ENCODE measurements at regions of chr7 and their contacts with region 1.

Region 1: DNA sequence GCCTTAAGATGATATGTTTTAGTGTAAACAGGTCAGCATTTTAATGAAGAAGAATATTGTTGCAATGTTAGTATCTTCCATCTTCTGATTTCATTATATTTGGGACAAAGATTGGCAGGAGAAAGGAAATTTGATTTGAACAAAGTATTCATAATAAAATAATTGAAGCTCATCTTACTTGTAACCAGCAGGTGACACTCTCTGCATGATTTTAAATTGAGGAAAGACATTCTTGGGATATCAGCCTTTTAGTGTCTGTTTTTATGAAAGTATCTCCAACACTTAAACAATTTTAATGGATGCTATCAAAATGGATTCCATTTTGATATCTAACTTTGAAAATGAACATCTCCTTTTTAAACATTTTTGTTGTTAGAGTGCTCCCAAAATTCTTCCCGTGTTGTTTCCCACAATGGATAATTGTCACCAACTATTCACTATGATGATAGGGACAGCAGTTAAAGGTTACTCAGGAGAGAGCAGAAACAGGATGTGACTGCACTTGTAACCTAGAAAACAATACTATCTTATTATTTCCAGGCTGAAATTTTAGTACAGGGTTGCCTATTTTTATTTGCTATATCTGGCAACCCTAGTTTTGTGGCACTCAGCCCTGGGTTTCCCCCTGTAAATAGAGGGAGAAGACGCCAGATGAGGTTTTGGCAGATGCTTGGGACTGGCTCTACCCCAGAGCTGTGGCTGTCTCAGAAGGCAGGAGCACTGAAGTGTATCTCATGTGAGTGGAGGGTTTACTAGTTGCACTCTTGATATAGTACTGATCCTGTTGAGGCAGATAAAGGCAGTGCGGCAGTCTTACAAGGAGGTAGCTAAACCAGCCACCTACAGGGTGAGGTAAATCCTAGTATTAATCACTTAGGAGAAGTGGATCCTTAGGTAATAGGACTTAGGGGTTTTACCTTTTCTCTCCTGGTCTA is 31.0 kb upstream of the ABCB4 start:
- DNase-seq: peak; percentile 11
- ATAC-seq: no peak
- H3K4me3 ChIP-seq: no peak overlapping the region
- H3K27ac ChIP-seq: no peak overlapping the region
- H3K4me1 ChIP-seq: peaks cover 14% of the 10 kb centered on the region
- H3K27me3 ChIP-seq: no peaks in the 10 kb centered on the region
- CTCF ChIP-seq: peak; percentile 34
- EP300 ChIP-seq: no peak
- POLR2A ChIP-seq: no peak
- RAD21 ChIP-seq: no peak

Region 2: GRCh38 chr7:87312215-87312865 is 194.2 kb before region 1 on chr7:
- CTCF ChIA-PET with region 1: interaction called, 7 read pairs
- POLR2A ChIA-PET with region 1: no interaction called
- in situ Hi-C with region 1: loop called (anchors 5 kb)
- intact Hi-C with region 1: loop called (anchors 1 kb)
- DNase-seq: peak; percentile 56
- ATAC-seq: peak; percentile 84
- H3K4me3 ChIP-seq: no peak overlapping the region
- H3K27ac ChIP-seq: no peak overlapping the region
- H3K4me1 ChIP-seq: peaks cover 42% of the 10 kb centered on the region
- H3K27me3 ChIP-seq: no peaks in the 10 kb centered on the region
- CTCF ChIP-seq: peak; percentile 95
- EP300 ChIP-seq: no peak
- POLR2A ChIP-seq: no peak
- RAD21 ChIP-seq: peak; percentile 92

Region 3: DNA sequence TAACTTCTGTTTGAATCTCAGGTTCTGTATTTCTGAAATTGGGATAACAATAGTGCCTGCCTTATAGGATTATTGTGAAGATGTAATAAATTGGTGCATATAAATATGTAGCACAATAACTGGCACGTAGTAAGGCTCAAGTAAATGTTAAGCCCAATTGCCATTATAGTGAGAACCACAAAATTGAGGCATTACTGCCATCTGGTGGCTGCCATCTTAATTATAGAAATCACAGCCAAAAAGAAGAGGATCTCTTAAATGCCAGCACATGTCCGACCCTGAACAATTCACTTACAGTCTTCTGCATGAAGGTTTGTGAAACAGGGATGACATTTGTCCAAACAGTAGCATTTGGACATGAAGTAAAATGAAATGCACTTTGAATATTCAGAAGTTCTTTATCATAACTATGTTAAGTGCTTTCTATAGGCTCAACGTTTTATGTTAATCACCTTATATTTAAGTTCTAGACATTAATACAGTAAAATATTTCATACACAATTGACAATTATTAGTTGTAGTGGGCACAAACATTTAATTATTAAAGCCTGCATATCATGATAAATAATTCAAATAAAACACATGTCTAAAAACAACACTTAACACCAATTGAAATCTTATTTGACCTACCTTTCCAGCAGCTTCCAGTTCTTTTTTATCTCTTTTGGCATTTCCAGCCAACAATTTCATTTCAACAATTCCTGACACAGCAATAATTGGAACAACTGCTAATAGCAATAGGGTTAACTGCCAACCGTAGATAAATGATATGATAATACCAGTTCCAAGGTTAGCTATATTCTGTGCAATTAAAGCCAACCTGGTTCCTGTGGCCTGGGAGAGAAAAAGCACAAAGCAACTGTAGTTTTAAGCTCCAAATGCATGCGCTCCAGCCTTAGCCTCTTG is 89.6 kb before region 1 on chr7:
- CTCF ChIA-PET with region 1: no interaction called
- POLR2A ChIA-PET with region 1: no interaction called
- in situ Hi-C with region 1: no loop called
- intact Hi-C with region 1: loop called (anchors 2 kb)
- DNase-seq: peak; percentile 59
- ATAC-seq: peak; percentile 77
- H3K4me3 ChIP-seq: no peak overlapping the region
- H3K27ac ChIP-seq: no peak overlapping the region
- H3K4me1 ChIP-seq: peaks cover 11% of the 10 kb centered on the region
- H3K27me3 ChIP-seq: no peaks in the 10 kb centered on the region
- CTCF ChIP-seq: peak; percentile 85
- EP300 ChIP-seq: no peak
- POLR2A ChIP-seq: no peak
- RAD21 ChIP-seq: peak; percentile 73

Region 4: GRCh38 chr7:87463982-87464381 is 42.5 kb before region 1 on chr7:
- CTCF ChIA-PET with region 1: no interaction called
- POLR2A ChIA-PET with region 1: interaction called, 15 read pairs
- in situ Hi-C with region 1: no loop called
- intact Hi-C with region 1: no loop called
- DNase-seq: peak; percentile 84
- ATAC-seq: peak; percentile 88
- H3K4me3 ChIP-seq: peak overlapping the region in 2 of 3 experiments; percentile 7 to 51; a peak in 3 of 6 replicates
- H3K27ac ChIP-seq: peak overlapping the region; percentile 87
- H3K4me1 ChIP-seq: peaks cover 37% of the 10 kb centered on the region
- H3K27me3 ChIP-seq: no peaks in the 10 kb centered on the region
- CTCF ChIP-seq: no peak
- EP300 ChIP-seq: peak; percentile 76 to 89; a peak in 3 of 4 replicates
- POLR2A ChIP-seq: no peak
- RAD21 ChIP-seq: no peak

Region 5: GRCh38 chr7:87564289-87564963 is 57.9 kb after region 1 on chr7:
- CTCF ChIA-PET with region 1: no interaction called
- POLR2A ChIA-PET with region 1: no interaction called
- in situ Hi-C with region 1: no loop called
- intact Hi-C with region 1: no loop called
- DNase-seq: peak; percentile 20
- ATAC-seq: peak; percentile 87
- H3K4me3 ChIP-seq: no peak overlapping the region
- H3K27ac ChIP-seq: peak overlapping the region; percentile 23
- H3K4me1 ChIP-seq: peaks cover 23% of the 10 kb centered on the region
- H3K27me3 ChIP-seq: no peaks in the 10 kb centered on the region
- CTCF ChIP-seq: peak; percentile 79
- EP300 ChIP-seq: no peak
- POLR2A ChIP-seq: no peak
- RAD21 ChIP-seq: no peak

Region 6: DNA sequence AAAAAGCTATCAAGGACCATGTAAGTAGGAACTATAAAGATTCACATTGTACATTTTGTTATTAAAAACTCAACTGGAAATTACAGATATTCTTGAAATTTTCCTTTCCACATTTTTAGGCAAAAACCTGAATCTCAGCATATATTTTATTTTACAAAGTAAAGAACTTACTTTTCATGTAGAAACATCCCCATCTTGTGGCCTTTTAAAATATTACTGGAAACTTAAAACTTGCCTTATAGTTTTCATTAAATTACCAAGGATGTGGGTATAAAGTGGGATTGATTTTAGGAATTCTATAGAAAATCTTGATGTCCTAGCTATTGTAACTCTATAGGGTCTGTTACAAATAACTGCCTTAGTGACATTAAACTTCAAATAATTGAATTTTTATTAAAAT is 380.4 kb after region 1 on chr7:
- CTCF ChIA-PET with region 1: no interaction called
- POLR2A ChIA-PET with region 1: no interaction called
- in situ Hi-C with region 1: no loop called
- intact Hi-C with region 1: loop called (anchors 5 kb)
- DNase-seq: peak; percentile 20
- ATAC-seq: no peak
- H3K4me3 ChIP-seq: no peak overlapping the region
- H3K27ac ChIP-seq: no peak overlapping the region
- H3K4me1 ChIP-seq: 0 out of 2 replicates have a peak, but pooled peaks cover under 1% of the 10 kb centered on the region
- H3K27me3 ChIP-seq: no peaks in the 10 kb centered on the region
- CTCF ChIP-seq: 0 out of 2 replicates have a peak, but pooled peaks have one; percentile 10
- EP300 ChIP-seq: no peak
- POLR2A ChIP-seq: no peak
- RAD21 ChIP-seq: no peak

Measured in HepG2 (cell line).